Breast epithelium (tissue), 4 donors: ENCODE measurements at regions of chr4 and their contacts with region 1.

Region 1: DNA sequence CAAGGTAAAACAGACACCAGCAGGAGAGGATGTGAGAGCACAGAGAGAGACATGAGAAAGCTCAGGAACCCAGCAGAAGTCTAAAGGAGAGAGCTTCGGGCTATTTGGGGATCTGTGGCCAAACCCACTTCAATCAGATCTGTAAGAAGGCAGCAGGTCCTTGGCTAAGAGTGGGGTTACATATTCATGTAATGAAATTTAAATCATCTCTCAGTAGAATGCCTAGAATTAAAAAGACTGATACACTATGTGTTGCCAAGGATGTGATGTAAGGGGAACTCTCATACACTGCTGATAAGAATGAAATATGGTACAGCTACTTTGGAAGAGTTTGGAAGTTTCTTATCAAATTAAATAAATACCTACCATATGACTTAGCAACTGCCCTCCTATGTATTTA is 35.8 kb downstream of the PDE5A start:
- DNase-seq: no peak
- H3K4me3 ChIP-seq: no peak overlapping the region
- H3K27ac ChIP-seq: no peak overlapping the region
- H3K4me1 ChIP-seq: no peaks in the 10 kb centered on the region
- H3K27me3 ChIP-seq: no peaks in the 10 kb centered on the region
- CTCF ChIP-seq: no peak
- POLR2A ChIP-seq: no peak

Region 2: GRCh38 chr4:119124352-119124751 is 468.5 kb before region 1 on chr4:
- intact Hi-C with region 1: loop called (anchors 5 kb)
- DNase-seq: no peak
- H3K4me3 ChIP-seq: no peak overlapping the region
- H3K27ac ChIP-seq: peak overlapping the region in 1 of 2 donors; percentile 8
- H3K4me1 ChIP-seq: no peaks in the 10 kb centered on the region
- H3K27me3 ChIP-seq: no peaks in the 10 kb centered on the region
- CTCF ChIP-seq: no peak
- POLR2A ChIP-seq: no peak

Region 3: GRCh38 chr4:119510395-119511149 is 82.3 kb before region 1 on chr4:
- intact Hi-C with region 1: no loop called
- DNase-seq: no peak
- H3K4me3 ChIP-seq: no peak overlapping the region
- H3K27ac ChIP-seq: no peak overlapping the region
- H3K4me1 ChIP-seq: no peaks in the 10 kb centered on the region
- H3K27me3 ChIP-seq: no peaks in the 10 kb centered on the region
- CTCF ChIP-seq: no peak
- POLR2A ChIP-seq: no peak

Region 4: DNA sequence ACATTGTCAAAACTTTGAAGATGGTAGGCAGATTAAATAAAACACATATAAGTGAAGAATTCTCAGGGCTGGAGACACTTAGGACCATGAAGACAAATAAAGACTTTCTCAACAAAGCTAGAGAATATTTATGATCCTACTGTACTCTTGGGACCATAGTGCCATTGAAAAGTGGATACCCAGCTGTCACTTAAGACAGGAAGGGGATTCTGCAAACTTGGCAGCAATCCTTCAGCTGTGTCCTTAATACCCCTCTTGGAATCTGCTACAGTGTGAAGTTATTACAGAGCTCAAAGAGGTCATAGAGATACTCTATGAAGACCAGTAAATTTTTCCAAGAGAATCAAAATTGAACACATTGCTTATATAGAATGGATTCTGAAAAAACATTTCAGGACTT is 11.4 kb after region 1 on chr4:
- intact Hi-C with region 1: no loop called
- DNase-seq: no peak
- H3K4me3 ChIP-seq: no peak overlapping the region
- H3K27ac ChIP-seq: no peak overlapping the region
- H3K4me1 ChIP-seq: no peaks in the 10 kb centered on the region
- H3K27me3 ChIP-seq: no peaks in the 10 kb centered on the region
- CTCF ChIP-seq: no peak
- POLR2A ChIP-seq: no peak